ENCODE measurements at regions of chr12 and their contacts with region 1.

Region 1: GRCh38 chr12:54935235-54935951 is 49.2 kb downstream of the TESPA1 start:
- DNase-seq: peak; percentile 76
- CTCF ChIP-seq: peak; percentile 33

Region 2: DNA sequence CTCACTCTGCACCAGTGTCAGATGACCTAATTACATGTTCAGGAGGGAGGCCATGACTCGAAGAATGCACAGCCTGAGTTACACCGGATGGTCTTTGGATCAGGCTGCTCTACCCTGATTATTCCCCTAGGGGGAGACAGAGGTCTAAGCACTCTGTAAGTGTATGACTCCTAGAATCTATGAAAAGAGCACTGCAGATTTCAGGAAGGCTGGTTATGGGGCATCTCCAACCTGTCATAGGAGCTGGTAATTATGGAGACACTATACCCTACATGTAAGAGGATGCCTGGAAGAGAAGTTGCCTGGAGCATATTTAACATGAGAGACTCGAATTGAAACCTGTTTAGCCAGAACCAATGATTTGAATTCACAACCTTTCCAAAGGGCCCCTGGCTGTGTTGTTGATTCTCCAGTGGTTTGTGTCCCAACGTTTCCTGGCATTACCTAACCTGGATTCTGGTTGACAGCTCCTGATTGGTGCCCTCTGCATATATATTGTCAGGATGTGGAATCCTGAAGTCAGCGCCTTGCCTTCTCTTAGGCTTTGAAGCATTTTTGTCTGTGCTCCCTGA is 81.3 kb before region 1 on chr12 and contains the start of gene MUCL1:
- in situ Hi-C with region 1: loop called (anchors 10 kb)
- DNase-seq: peak; percentile 39
- CTCF ChIP-seq: peak; percentile 82

Measured in GM13977 (cell line).